ENCODE measurements at regions of chr20 and their contacts with region 1.

Region 1: DNA sequence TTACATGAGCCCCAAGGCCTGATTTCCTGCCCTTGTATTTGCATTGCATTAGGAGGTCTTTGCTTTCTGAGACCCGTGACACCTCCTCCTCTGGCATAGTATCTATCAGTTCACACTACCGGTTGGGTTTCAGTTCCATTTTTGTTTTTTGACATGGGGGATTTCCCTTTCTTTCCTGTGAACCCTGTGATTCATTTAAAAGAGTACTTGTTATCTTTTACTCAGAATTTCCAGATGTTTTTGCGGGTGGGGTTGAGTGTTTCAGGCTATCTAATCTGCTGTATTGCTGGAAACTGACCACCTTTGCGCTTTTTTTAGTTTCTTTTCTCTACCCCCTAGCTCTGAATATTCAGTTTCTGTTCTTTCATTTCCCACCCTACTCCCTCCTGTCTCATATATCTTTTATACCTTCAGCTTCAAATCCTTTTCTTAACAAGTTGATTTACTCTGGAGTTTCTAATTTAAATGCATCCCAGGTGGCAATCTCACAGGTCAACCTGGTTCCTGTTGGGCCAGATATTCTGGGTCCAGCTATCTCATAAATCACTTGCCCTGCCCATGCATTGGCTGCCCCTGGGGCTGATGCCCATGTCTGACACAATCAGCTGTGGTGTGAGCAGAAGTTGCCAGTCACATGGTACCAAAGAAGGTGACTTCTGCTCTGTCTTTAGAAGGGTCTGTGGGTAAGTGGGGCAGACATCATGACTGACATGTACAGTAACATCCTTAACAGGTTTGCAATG is 14.3 kb upstream of the NCOA3 start:
- DNase-seq: peak; percentile 92
- ATAC-seq: peak; percentile 78
- H3K4me3 ChIP-seq: peak overlapping the region in 3 of 5 experiments; percentile 29 to 59 (median 38)
- H3K4me3 Mint-ChIP-seq: peak overlapping the region; percentile 70
- H3K27ac ChIP-seq: peak overlapping the region; percentile 85 to 86
- H3K27ac Mint-ChIP-seq: peak overlapping the region; percentile 89
- H3K4me1 ChIP-seq: peaks cover 47 to 68% of the 10 kb centered on the region in 2 donors
- H3K4me1 Mint-ChIP-seq: peaks cover 57% of the 10 kb centered on the region
- H3K27me3 ChIP-seq: no peaks in the 10 kb centered on the region
- H3K27me3 Mint-ChIP-seq: no peaks in the 10 kb centered on the region
- CTCF ChIP-seq: no peak

Region 2: DNA sequence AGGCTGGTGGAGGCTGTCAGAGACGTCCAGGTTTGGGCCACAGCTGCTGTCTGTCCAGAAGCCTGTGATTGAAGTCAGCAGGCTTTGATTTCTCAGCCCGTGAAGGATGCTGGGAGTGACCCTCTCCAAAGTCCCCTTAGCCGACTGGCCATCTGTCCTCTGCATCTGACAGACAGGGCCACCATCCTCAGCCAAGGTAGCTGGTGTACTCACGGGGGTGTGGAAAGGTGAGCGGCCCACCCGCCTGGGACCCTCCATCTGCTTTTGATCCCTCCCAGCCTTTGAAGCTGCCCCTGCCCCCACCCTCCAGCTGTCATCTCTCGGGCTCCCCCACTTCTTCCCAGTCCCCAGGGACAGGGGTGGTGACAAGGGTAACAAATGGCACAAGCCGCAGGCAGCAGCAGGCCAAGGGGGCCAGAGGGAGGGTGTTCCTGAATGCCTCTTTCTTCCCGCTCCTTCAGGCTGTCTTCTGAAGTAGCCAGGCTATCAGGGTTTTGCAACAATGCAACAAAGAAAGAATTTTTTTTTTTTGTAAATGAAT is 508.3 kb before region 1 on chr20:
- CTCF ChIA-PET with region 1: no interaction called
- POLR2A ChIA-PET with region 1: no interaction called
- intact Hi-C with region 1: no loop called
- DNase-seq: no peak
- ATAC-seq: no peak
- H3K4me3 ChIP-seq: no peak overlapping the region
- H3K4me3 Mint-ChIP-seq: no peak overlapping the region
- H3K27ac ChIP-seq: no peak overlapping the region
- H3K27ac Mint-ChIP-seq: no peak overlapping the region
- H3K4me1 ChIP-seq: no peaks in the 10 kb centered on the region
- H3K4me1 Mint-ChIP-seq: no peaks in the 10 kb centered on the region
- H3K27me3 ChIP-seq: peaks cover 0 to 8% (median 2%) of the 10 kb centered on the region in 4 experiments
- H3K27me3 Mint-ChIP-seq: peaks cover 44% of the 10 kb centered on the region
- CTCF ChIP-seq: no peak

Region 3: GRCh38 chr20:47258745-47259695 is 228.3 kb before region 1 on chr20:
- CTCF ChIA-PET with region 1: no interaction called
- POLR2A ChIA-PET with region 1: no interaction called
- intact Hi-C with region 1: loop called (anchors 1 kb)
- DNase-seq: peak; percentile 78
- ATAC-seq: peak; percentile 31
- H3K4me3 ChIP-seq: peak overlapping the region in 1 of 5 experiments; percentile 8
- H3K4me3 Mint-ChIP-seq: peak overlapping the region; percentile 81
- H3K27ac ChIP-seq: peak overlapping the region; percentile 75 to 78
- H3K27ac Mint-ChIP-seq: peak overlapping the region; percentile 93
- H3K4me1 ChIP-seq: peaks cover 53 to 62% of the 10 kb centered on the region in 2 donors
- H3K4me1 Mint-ChIP-seq: peaks cover 69% of the 10 kb centered on the region
- H3K27me3 ChIP-seq: no peaks in the 10 kb centered on the region
- H3K27me3 Mint-ChIP-seq: no peaks in the 10 kb centered on the region
- CTCF ChIP-seq: no peak

Region 4: DNA sequence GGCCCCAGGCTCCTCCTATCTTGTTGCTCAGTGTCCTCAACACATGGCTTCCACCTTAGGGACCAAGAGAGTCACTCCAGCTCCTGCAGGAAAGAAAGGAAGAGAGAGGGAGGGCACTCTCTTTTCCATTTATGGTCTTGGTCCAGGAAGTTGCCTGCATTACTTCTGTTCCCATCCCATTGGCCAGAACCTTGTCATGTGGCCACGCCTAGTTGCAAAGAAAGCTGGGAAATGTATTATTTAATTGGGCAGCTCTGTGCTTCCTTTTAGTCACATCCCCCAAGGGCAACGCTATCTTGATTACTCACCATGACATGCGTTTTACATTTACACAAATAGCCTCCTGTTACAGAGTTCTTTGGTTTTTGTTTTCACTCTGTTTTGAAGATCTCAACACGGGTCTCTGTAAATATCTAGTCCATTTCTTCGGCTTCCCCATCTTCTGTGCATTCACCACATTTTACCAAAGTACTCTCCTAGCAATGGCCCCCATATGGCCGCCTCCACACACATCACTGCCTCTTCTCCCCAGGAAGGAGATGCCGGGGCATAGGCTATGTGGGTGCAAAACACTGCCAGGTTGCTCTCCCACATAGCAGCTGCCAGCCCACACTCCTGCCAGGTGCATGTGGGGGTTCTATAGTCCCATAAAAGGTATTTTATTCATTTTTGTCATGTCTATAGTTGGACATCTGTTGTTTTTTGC is 95.2 kb before region 1 on chr20:
- CTCF ChIA-PET with region 1: interaction called, 3 read pairs
- POLR2A ChIA-PET with region 1: no interaction called
- intact Hi-C with region 1: loop called (anchors 2 kb)
- DNase-seq: peak; percentile 54
- ATAC-seq: peak; percentile 71
- H3K4me3 ChIP-seq: no peak overlapping the region
- H3K4me3 Mint-ChIP-seq: peak overlapping the region; percentile 57
- H3K27ac ChIP-seq: peak overlapping the region; percentile 46 to 52
- H3K27ac Mint-ChIP-seq: peak overlapping the region; percentile 83
- H3K4me1 ChIP-seq: peaks cover 28 to 34% of the 10 kb centered on the region in 2 donors
- H3K4me1 Mint-ChIP-seq: peaks cover 37% of the 10 kb centered on the region
- H3K27me3 ChIP-seq: no peaks in the 10 kb centered on the region
- H3K27me3 Mint-ChIP-seq: no peaks in the 10 kb centered on the region
- CTCF ChIP-seq: no peak

Region 5: DNA sequence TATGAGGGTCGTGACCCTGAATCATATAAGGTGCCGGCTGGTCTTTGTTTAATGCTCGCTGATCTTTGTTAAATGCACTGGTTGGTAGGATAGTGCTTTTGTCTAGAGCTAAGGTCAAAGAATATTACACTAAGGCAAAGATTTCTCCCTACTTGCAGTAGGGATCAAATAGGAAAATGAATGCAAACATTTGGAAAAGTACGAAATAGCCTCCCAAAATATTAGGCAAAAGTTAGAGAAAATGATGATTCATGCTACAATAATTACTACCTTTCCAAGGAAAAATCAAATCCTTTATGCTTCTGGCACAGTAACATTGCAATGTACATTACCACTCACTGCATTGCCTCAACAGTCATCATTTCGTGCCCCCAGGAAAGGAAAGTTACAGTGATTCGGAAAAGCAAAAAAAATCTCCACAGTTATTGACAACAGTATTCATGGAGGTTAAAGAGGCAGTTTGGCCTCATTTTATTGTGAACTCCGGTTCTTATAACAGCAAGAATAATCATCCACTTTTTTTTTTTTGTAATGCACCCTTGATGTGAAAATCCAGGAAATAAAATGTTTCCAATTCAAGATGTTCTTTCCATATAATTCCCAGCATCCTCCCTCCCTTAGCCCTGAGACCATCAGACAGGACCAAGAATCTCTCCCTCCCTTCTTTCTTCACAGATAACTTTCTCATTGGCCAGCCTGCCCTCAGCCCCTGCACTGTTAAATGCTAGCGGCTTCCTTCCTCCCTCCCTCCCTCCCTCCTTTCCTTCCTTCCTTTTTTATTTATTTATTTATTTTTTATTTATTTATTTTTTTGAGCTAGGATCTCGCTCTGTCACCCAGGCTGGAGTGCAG is 69.1 kb before region 1 on chr20:
- CTCF ChIA-PET with region 1: interaction called, 13 read pairs
- POLR2A ChIA-PET with region 1: interaction called, 54 read pairs
- intact Hi-C with region 1: no loop called
- DNase-seq: no peak
- ATAC-seq: no peak
- H3K4me3 ChIP-seq: no peak overlapping the region
- H3K4me3 Mint-ChIP-seq: no peak overlapping the region
- H3K27ac ChIP-seq: peak overlapping the region; percentile 97 to 99
- H3K27ac Mint-ChIP-seq: peak overlapping the region; percentile 99
- H3K4me1 ChIP-seq: peaks cover 59 to 73% of the 10 kb centered on the region in 2 donors
- H3K4me1 Mint-ChIP-seq: peaks cover 67% of the 10 kb centered on the region
- H3K27me3 ChIP-seq: no peaks in the 10 kb centered on the region
- H3K27me3 Mint-ChIP-seq: no peaks in the 10 kb centered on the region
- CTCF ChIP-seq: no peak

Region 6: GRCh38 chr20:47453142-47453782 is 34.1 kb before region 1 on chr20:
- CTCF ChIA-PET with region 1: interaction called, 3 read pairs
- POLR2A ChIA-PET with region 1: interaction called, 3 read pairs
- intact Hi-C with region 1: loop called (anchors 5 kb)
- DNase-seq: peak; percentile 43
- ATAC-seq: peak; percentile 72
- H3K4me3 ChIP-seq: no peak overlapping the region
- H3K4me3 Mint-ChIP-seq: peak overlapping the region; percentile 78
- H3K27ac ChIP-seq: peak overlapping the region in 1 of 2 donors; percentile 9
- H3K27ac Mint-ChIP-seq: peak overlapping the region; percentile 86
- H3K4me1 ChIP-seq: peaks cover 42 to 45% of the 10 kb centered on the region in 2 donors
- H3K4me1 Mint-ChIP-seq: peaks cover 50% of the 10 kb centered on the region
- H3K27me3 ChIP-seq: no peaks in the 10 kb centered on the region
- H3K27me3 Mint-ChIP-seq: no peaks in the 10 kb centered on the region
- CTCF ChIP-seq: no peak

Region 7: DNA sequence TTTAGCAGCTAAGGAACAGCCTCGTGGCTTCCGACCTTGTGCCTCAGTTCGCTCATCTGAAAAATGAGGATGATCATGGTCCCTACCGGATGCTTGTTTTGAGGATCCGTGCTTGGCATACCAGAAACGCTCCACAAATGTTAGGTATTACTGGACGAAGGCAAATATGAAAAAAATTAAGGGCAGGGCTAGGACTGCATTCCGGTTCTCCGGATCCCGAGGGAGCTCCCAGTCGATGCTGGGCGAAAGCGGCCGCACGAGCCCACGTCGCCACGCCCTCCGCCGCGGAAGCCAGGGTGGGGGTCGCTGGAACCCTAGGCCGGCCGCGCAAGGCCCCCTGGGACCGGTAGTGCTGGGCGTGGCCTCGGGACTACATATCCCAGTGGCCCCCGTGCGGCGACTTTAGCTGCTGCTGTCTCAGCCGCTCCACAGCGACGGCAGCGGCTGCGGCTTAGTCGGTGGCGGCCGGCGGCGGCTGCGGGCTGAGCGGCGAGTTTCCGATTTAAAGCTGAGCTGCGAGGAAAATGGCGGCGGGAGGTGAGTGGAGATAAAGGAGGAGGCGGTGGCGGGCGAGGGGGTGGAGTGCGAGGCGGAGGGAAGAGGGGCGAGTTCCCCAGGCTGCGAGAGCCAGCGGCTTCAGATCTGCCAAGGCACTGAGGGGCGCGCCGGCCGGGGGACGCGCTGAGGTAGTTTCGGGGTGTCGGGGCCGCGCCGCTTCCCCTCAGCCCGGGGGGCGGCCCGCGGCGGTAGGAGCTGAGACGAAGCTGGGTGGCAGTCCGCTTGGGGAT is 14.3 kb after region 1 on chr20 and contains the start of gene NCOA3:
- CTCF ChIA-PET with region 1: interaction called, 16 read pairs
- POLR2A ChIA-PET with region 1: interaction called, 69 read pairs
- intact Hi-C with region 1: loop called (anchors 1 kb)
- DNase-seq: peak; percentile 93
- ATAC-seq: peak; percentile 91
- H3K4me3 ChIP-seq: peak within 1 kb of the TSS; percentile 90 to 99 (median 97)
- H3K4me3 Mint-ChIP-seq: peak within 1 kb of the TSS; percentile 100
- H3K27ac ChIP-seq: peak within 1 kb of the TSS; percentile 90 to 95
- H3K27ac Mint-ChIP-seq: peak within 1 kb of the TSS; percentile 100
- H3K4me1 ChIP-seq: peaks cover 28 to 33% of the 10 kb centered on the region in 2 donors
- H3K4me1 Mint-ChIP-seq: peaks cover 48% of the 10 kb centered on the region
- H3K27me3 ChIP-seq: no peaks in the 10 kb centered on the region
- H3K27me3 Mint-ChIP-seq: no peaks in the 10 kb centered on the region
- CTCF ChIP-seq: peak; percentile 59
- total RNA-seq, gene NCOA3: 289 and 309 TPM in 2 replicates